ENCODE measurements at regions of chr22 and their contacts with region 1.

Region 1: GRCh38 chr22:39490135-39490798 is 11.8 kb upstream of the MIEF1 start:
- DNase-seq: peak; percentile 66 to 83 (median 77)
- H3K4me3 ChIP-seq: no peak overlapping the region
- H3K4me3 Mint-ChIP-seq: peak overlapping the region in 2 of 8 donors; percentile 17 to 71
- H3K27ac ChIP-seq: no peak overlapping the region
- H3K27ac Mint-ChIP-seq: peak overlapping the region in 6 of 7 donors; percentile 10 to 81 (median 44)
- H3K4me1 ChIP-seq: peaks cover 6% of the 10 kb centered on the region
- H3K4me1 Mint-ChIP-seq: peaks cover 5 to 13% (median 9%) of the 10 kb centered on the region in 4 donors
- H3K27me3 ChIP-seq: no peaks in the 10 kb centered on the region
- H3K27me3 Mint-ChIP-seq: no peaks in the 10 kb centered on the region

Region 2: GRCh38 chr22:39502109-39502788 is 12.0 kb after region 1 on chr22 and contains the start of gene MIEF1:
- CTCF ChIA-PET with region 1: interaction called, 11 read pairs
- POLR2A ChIA-PET with region 1: interaction called, 15 read pairs
- intact Hi-C with region 1: no loop called
- DNase-seq: peak; percentile 79 to 91 (median 82)
- H3K4me3 ChIP-seq: peak within 1 kb of the TSS; percentile 63 to 66
- H3K4me3 Mint-ChIP-seq: peak within 1 kb of the TSS; percentile 95 to 99 (median 96)
- H3K27ac ChIP-seq: peak within 1 kb of the TSS; percentile 70
- H3K27ac Mint-ChIP-seq: peak within 1 kb of the TSS; percentile 78 to 98 (median 96)
- H3K4me1 ChIP-seq: peaks cover 31% of the 10 kb centered on the region
- H3K4me1 Mint-ChIP-seq: peaks cover 13 to 50% (median 35%) of the 10 kb centered on the region in 4 donors
- H3K27me3 ChIP-seq: no peaks in the 10 kb centered on the region
- H3K27me3 Mint-ChIP-seq: no peaks in the 10 kb centered on the region
- total RNA-seq, gene MIEF1: 40.5 to 44.3 TPM

Region 3: DNA sequence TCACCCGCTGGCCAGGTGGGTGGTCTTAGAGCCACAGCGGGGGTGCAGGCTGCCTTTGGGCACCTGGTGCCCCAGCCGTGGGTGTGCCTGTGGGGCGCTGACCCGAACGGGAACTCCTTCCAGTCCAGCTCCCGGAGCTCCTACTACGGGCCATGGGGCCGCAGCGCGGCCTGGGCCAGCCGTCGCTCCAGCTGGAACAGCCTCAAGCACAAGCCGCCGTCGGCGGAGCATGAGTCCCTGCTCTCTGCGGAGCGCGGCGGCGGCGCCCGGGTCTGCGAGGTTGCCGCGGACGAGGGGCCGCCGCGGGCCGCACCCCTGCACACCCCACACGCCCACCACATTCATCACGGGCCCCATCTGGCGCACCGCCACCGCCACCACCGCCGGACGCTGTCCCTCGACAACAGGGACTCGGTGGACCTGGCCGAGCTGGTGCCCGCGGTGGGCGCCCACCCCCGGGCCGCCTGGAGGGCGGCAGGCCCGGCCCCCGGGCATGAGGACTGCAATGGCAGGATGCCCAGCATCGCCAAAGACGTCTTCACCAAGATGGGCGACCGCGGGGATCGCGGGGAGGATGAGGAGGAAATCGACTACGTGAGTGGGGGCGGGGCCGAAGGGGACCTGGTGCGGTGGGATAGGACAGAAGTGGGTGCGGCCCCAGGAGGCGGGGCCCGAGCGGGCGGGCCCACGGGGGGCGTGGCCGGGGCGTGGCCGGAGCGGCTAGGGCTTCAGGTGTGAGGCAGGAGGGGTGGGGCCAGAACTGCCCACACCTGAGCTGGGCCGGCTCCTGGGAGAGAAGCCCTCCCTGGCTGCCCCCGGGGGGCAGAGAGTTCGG is 171.8 kb after region 1 on chr22:
- CTCF ChIA-PET with region 1: no interaction called
- POLR2A ChIA-PET with region 1: no interaction called
- intact Hi-C with region 1: no loop called
- DNase-seq: peak; percentile 83 to 88 (median 86)
- H3K4me3 ChIP-seq: peak overlapping the region; percentile 17 to 51
- H3K4me3 Mint-ChIP-seq: peak overlapping the region; percentile 35 to 87 (median 82)
- H3K27ac ChIP-seq: peak overlapping the region; percentile 34
- H3K27ac Mint-ChIP-seq: peak overlapping the region in 5 of 7 donors; percentile 59 to 91 (median 90)
- H3K4me1 ChIP-seq: peaks cover 67% of the 10 kb centered on the region
- H3K4me1 Mint-ChIP-seq: peaks cover 34 to 68% (median 52%) of the 10 kb centered on the region in 4 donors
- H3K27me3 ChIP-seq: no peaks in the 10 kb centered on the region
- H3K27me3 Mint-ChIP-seq: no peaks in the 10 kb centered on the region

Measured in CD4-positive, alpha-beta memory T cell (primary cell).